Activated CD8-positive, alpha-beta memory T cell treated with anti-CD3 and anti-CD28 coated beads, Interleukin-2, amount 10 ng/mL, durations not matched to agents 7 days and 5 days (primary cell): ENCODE measurements at regions of chr7 and their contacts with region 1.

Region 1: GRCh38 chr7:43260980-43261878 is 148.8 kb downstream of the HECW1 start:
- DNase-seq: peak; percentile 77
- ATAC-seq: peak; percentile 76
- H3K4me3 Mint-ChIP-seq: no peak overlapping the region
- H3K27ac Mint-ChIP-seq: no peak overlapping the region
- H3K4me1 Mint-ChIP-seq: no peaks in the 10 kb centered on the region
- H3K27me3 Mint-ChIP-seq: peaks cover 3% of the 10 kb centered on the region

Region 2: DNA sequence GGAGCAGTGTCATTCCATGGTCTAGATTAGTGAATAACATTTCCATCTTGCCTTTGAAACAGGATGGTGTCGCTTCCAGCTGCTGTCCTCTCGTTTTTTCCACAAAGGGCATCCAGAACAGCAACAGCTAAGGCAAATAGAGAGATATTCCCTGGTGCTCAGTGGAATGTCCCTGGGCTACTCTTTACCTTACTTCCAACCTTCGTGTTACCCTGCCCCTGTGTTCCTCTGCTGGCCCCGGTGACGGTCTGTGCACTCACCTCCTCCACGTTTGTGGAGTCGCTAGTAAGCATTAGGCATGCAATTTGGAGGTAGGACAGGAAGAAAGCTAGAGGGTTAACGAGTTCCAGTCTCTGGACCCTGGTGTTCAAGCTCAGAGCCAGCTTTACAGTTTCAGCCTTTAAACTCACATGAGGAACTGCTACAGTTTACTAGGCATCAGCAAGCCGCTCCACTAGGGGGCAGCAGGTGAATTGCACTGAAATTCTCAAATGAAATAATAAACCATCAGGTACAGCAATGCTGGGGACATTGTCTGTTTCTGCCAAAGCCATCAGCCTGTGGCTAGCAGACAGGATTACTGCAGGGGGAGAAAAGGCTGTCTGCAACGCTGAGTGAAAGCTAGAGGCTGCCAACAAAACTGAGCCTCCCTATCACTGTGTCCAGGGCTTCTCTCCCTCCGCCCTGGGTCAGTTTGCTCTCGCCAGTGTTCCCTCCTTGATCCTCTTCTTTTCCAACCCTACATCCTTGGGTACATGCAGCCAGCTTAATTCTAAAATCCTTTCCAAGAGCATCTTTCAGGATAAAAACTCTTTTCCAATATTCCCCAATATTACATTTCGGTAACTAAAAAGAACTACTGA is 320.0 kb before region 1 on chr7:
- CTCF ChIA-PET with region 1: interaction called, 30 read pairs
- DNase-seq: peak; percentile 87
- ATAC-seq: peak; percentile 61
- H3K4me3 Mint-ChIP-seq: no peak overlapping the region
- H3K27ac Mint-ChIP-seq: no peak overlapping the region
- H3K4me1 Mint-ChIP-seq: peaks cover 19% of the 10 kb centered on the region
- H3K27me3 Mint-ChIP-seq: no peaks in the 10 kb centered on the region

Region 3: DNA sequence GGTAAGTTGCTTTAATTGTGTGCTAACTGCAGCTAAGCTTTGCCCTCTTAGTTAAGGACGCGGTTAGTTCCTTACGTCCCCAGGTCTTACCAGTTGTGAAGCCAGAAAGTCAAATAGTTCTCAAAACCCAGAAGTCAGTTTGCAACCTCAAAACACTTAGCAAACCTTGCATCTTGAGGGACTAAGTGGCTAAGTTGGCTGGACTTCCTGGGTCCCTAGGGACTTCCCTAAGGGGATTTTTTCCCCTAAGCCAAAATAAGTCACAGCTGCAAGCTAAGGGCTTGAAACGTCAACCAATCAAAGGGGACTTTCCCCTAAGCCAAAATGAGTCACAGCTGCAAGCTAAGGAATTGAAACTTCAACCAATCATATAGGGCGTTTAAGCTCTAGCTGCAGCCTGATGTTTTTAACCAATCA is 185.0 kb before region 1 on chr7:
- CTCF ChIA-PET with region 1: no interaction called
- DNase-seq: no peak
- ATAC-seq: no peak
- H3K4me3 Mint-ChIP-seq: no peak overlapping the region
- H3K27ac Mint-ChIP-seq: no peak overlapping the region
- H3K4me1 Mint-ChIP-seq: peaks cover 5% of the 10 kb centered on the region
- H3K27me3 Mint-ChIP-seq: peaks cover 15% of the 10 kb centered on the region

Region 4: DNA sequence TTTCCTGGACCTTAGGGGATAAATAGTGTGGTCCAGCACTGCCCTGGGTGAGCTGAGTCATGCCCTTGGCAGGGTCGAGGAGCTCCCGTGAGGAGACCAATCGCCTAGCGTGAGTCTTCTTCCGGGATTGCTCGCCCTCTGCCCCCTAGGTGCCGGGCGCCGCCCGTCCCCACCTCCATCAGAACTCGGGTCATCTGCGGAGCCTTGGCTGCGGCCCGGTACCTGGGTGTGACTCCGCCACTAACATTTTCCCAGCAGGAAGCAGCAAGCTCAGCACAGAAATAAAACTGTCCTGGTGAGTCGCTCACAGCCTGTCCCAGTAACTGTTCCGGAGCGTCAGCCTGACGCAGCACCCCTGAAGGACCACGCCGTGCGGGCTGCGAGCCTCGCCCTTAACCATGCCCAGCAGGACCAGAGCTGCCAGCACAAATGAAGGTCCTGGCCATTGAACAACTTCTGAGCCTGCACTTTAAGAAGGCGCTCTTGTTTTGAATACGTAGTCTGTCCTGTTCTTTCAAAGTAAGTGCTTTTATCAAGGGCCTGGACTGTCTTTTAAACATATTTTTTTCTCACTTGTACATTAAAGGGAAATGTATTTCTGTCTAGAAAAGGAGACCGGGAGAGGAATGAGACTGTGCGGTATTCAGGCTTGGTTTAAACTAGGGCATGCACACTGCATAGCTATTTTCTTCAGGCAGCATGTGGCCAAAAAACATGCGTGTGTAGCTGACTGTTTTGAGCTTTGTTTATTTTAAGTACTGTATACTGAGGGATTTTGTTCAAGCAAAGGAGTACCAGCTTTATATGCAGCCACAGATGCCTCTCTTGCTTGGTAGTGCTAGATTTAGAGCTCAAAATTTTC is 12.0 kb before region 1 on chr7:
- CTCF ChIA-PET with region 1: interaction called, 12 read pairs
- DNase-seq: no peak
- ATAC-seq: no peak
- H3K4me3 Mint-ChIP-seq: no peak overlapping the region
- H3K27ac Mint-ChIP-seq: no peak overlapping the region
- H3K4me1 Mint-ChIP-seq: no peaks in the 10 kb centered on the region
- H3K27me3 Mint-ChIP-seq: peaks cover 5% of the 10 kb centered on the region

Region 5: DNA sequence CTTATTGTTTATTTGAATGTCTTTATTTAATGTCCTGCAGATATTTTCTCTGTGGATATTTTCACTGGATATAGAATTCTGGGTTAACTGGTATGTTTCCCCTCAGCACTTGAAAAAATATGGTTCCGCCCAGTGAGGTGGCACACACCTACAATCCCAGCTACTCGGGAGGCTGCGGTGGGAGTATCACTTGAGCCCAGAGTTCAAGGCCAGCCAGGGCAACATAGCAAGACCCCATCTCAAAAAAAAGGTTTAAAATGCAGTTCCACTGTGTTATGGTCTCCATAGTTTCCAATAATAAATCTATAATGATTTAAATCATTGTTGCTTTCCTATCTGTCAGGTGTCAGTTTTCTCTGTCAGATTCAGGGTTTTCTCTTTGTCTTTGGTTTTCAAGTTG is 156.2 kb after region 1 on chr7:
- CTCF ChIA-PET with region 1: no interaction called
- DNase-seq: no peak
- ATAC-seq: no peak
- H3K4me3 Mint-ChIP-seq: no peak overlapping the region
- H3K27ac Mint-ChIP-seq: no peak overlapping the region
- H3K4me1 Mint-ChIP-seq: no peaks in the 10 kb centered on the region
- H3K27me3 Mint-ChIP-seq: peaks cover 21% of the 10 kb centered on the region